WTC11 (cell line): ENCODE measurements at regions of chr14 and their contacts with region 1.

Region 1: DNA sequence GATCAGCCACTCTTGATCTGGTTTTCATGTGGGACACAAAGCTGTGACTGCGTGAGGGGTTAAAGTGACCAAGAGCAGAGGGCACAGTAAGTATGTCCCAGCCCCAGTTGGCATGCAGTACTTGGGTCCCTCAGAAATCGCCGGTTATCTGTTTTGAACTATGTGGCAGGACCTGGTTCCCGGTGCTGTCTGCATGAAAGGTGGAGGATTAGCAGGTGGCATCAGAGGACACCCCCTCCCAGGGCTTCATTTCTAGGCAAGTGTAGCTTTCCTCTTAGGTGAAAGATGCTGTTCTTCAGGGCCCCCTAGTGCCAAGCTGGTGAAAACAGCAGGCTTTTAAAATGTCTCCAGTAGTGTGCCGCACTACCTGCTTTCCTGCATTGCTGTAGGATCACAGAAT is 57.1 kb downstream of the ATG14 start:
- DNase-seq: peak; percentile 62
- ATAC-seq: peak; percentile 90
- H3K4me3 Mint-ChIP-seq: no peak overlapping the region
- H3K27ac Mint-ChIP-seq: peak overlapping the region; percentile 15; the same call in 1 of the 2 replicates
- H3K4me1 Mint-ChIP-seq: peaks cover 13% of the 10 kb centered on the region
- H3K27me3 Mint-ChIP-seq: no peaks in the 10 kb centered on the region
- CTCF ChIP-seq: peak; percentile 34; the same call in 1 of the 2 replicates

Region 2: DNA sequence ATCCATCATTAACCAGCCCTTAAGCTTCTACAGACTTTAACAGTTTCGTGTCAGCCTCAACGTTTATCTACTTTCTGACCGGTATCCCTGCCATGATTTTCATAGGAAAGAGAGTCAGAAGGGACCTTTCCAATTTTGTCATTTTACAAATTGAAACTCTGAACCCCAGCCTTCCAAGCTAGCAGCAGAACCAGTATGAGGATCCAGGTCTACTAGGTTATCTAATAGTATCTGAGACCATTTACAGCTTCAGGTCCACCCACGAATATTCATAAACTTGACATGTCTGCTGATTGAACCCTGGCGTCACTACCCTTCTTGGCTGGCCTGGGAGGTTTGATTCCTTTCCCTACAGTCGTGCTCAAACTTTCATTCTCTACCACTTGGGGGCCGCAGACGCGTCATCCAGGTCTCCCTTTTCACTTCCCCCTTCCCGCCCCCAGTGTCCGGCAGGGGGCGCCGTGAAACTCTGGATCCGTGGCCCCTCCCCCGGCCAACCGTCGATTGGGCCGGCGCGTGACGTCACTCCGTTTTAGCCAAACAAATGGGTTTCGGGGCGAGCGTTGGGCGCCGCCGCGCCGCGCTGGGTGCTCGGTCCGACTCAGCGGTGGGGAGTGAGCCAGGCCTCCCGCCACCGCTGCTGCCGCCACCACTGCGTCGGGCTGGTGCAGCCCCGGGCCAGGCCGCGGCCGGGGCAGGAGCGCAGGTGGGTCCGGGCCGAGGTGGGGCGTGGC is 83.5 kb before region 1 on chr14 and contains the start of gene FBXO34:
- CTCF ChIA-PET with region 1: interaction called, 48 read pairs
- POLR2A ChIA-PET with region 1: interaction called, 5 read pairs
- DNase-seq: peak; percentile 99
- ATAC-seq: peak; percentile 90
- H3K4me3 Mint-ChIP-seq: peak within 1 kb of the TSS; percentile 84
- H3K27ac Mint-ChIP-seq: peak within 1 kb of the TSS; percentile 89
- H3K4me1 Mint-ChIP-seq: peaks cover 27% of the 10 kb centered on the region
- H3K27me3 Mint-ChIP-seq: no peaks in the 10 kb centered on the region
- CTCF ChIP-seq: peak; percentile 97
- total RNA-seq, gene FBXO34: 13.5 to 14.2 TPM (median 13.9 TPM) in 3 replicates

Region 3: DNA sequence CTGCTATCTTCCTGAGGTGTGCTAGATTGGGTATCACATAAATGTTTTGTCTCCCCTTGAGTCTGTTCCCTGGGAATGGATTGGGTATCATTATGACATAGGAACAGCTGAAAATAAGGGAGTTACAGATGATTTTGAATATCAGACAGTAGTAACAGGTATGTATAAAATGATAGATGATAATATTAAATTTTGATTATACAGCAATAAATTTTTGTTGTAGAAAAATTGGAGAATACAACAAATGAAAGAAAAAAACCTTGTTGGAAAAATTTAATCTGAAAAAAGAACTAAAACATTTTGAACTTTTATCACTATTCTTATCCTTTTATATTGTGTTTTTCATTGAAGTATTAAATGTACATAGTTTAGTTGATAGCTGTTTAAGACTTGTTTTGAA is 40.1 kb before region 1 on chr14:
- CTCF ChIA-PET with region 1: no interaction called
- POLR2A ChIA-PET with region 1: no interaction called
- DNase-seq: no peak
- ATAC-seq: no peak
- H3K4me3 Mint-ChIP-seq: no peak overlapping the region
- H3K27ac Mint-ChIP-seq: no peak overlapping the region
- H3K4me1 Mint-ChIP-seq: no peaks in the 10 kb centered on the region
- H3K27me3 Mint-ChIP-seq: peaks cover 11% of the 10 kb centered on the region; the same call in 1 of the 2 replicates
- CTCF ChIP-seq: no peak